Activated naive CD4-positive, alpha-beta T cell treated with anti-CD3 and anti-CD28 coated beads for 36 hours (primary cell): ENCODE measurements at regions of chr22 and their contacts with region 1.

Region 1: DNA sequence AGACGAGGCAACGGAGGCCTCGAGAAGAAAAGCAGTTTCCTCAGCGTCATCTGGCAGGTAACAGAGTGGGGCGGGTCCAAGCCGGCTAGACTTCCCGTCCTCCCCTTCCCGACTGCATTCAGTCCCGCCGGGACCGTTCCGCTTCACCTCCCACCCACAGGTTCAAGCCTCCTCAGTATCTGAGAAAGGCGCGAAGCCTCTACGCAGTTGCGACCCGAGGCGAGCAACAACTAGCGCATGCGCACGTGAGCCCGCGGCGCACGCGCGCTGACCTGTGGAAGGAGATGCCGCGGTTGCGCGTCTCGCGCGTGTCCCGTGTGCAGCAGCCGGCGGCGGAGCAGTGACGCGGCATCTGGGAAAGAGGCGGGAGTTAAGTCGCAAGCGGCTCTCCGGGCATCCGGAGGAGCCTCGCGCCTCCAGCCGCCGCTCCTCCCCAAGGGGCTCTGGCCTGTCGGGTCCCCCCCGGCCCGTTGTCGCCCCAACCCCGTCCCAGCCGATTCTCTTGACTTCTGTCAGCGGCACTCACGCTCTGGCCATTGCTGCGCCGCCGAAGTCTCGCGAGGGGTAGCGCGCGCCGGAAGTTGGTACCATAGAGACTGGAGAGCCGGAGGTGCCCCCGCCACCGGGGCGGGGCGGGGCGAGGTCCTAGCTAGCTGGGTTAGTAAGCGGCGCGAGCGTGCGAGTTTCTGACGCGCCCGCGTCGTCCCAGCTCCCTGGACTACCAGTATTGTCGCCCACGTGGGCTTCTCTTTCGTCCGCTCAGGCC is at the start of gene THAP7:
- DNase-seq: peak; percentile 97
- H3K4me3 Mint-ChIP-seq: peak within 1 kb of the TSS; percentile 89
- H3K27ac Mint-ChIP-seq: peak within 1 kb of the TSS; percentile 96
- H3K4me1 Mint-ChIP-seq: peaks cover 28% of the 10 kb centered on the region
- H3K27me3 Mint-ChIP-seq: no peaks in the 10 kb centered on the region
- total RNA-seq, gene THAP7: 20.4 to 21.2 TPM

Region 2: DNA sequence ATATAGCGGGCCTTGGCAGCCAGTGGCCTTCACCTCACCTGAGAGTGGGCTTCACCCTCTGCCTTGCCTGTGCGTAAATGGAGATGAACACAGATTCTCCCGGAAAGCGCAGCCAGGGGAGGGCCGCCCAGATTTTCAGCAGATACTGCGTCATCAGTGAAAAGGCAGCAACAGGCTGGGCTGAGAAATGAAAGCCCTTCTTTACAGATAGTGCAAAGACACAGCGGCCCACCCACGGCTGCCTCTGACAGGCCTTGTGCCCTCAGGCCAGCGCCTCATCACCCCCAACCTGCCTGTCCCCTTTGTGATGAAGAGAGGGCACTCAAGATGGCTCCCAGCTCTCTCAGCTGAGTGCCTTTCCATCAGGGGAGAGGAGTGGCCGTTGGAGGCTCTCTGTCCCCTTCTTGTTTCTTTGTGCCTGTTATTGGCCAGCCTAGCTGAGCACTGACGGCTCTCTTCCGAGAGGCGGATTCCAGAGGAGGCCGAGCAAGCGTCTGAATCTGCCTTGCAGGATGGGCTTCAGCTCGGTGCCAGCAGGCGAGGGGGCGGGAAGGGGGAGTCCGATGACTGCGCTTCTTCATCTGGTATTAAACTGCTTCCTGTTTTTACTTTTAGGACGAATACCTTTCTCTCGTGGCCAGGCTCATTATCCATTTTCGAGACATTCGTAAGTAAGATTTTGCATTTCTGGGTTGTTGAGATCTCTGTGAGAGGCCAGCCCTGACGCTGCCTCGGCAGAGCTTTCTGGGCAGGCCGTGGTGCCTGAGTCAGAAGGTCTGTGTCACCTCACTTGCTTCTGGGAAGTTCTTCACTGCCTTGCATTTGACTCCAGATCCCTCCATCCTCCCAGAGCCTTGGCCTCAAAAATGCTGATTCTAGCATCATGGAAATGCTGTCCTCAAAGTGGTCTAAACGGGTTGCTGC is 450.7 kb before region 1 on chr22:
- CTCF ChIA-PET with region 1: no interaction called
- intact Hi-C with region 1: loop called (anchors 5 kb)
- DNase-seq: peak; percentile 87
- H3K4me3 Mint-ChIP-seq: peak overlapping the region; percentile 70
- H3K27ac Mint-ChIP-seq: peak overlapping the region; percentile 100
- H3K4me1 Mint-ChIP-seq: peaks cover 93% of the 10 kb centered on the region
- H3K27me3 Mint-ChIP-seq: no peaks in the 10 kb centered on the region

Region 3: DNA sequence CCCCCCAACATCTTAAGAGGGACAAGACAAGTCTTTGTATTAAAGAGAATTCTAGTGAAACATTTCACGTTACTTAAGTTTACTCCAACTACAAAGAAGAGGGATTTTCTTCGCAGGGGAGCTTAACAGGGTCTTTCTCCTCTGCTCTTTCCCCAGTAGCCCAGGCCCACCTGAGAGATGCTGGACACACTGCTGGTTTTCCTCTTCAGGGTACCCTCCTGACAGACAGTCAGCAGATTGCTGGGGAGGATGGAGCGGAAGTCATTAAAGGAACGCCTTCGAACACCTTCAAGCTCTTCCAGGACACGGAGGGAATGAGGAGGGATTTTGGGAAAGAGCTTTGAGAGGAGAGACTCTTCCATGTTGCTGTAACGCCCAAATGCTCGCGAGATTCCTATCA is 182.3 kb before region 1 on chr22:
- CTCF ChIA-PET with region 1: no interaction called
- intact Hi-C with region 1: no loop called
- DNase-seq: no peak
- H3K4me3 Mint-ChIP-seq: no peak overlapping the region
- H3K27ac Mint-ChIP-seq: no peak overlapping the region
- H3K4me1 Mint-ChIP-seq: no peaks in the 10 kb centered on the region
- H3K27me3 Mint-ChIP-seq: no peaks in the 10 kb centered on the region

Region 4: GRCh38 chr22:20916983-20917810 is 84.5 kb before region 1 on chr22 and contains the start of gene CRKL:
- CTCF ChIA-PET with region 1: interaction called, 3 read pairs
- intact Hi-C with region 1: loop called (anchors 1 kb)
- DNase-seq: peak; percentile 97
- H3K4me3 Mint-ChIP-seq: peak within 1 kb of the TSS; percentile 98
- H3K27ac Mint-ChIP-seq: peak within 1 kb of the TSS; percentile 86
- H3K4me1 Mint-ChIP-seq: peaks cover 28% of the 10 kb centered on the region
- H3K27me3 Mint-ChIP-seq: no peaks in the 10 kb centered on the region
- total RNA-seq, gene CRKL: 60.5 to 62.2 TPM

Region 5: GRCh38 chr22:20981787-20982562 is 19.8 kb before region 1 on chr22 and contains the start of gene LZTR1:
- CTCF ChIA-PET with region 1: interaction called, 4 read pairs
- intact Hi-C with region 1: loop called (anchors 1 kb)
- DNase-seq: peak; percentile 80
- H3K4me3 Mint-ChIP-seq: peak within 1 kb of the TSS; percentile 97
- H3K27ac Mint-ChIP-seq: peak within 1 kb of the TSS; percentile 87
- H3K4me1 Mint-ChIP-seq: peaks cover 41% of the 10 kb centered on the region
- H3K27me3 Mint-ChIP-seq: no peaks in the 10 kb centered on the region
- total RNA-seq, gene LZTR1: 23.1 to 27.4 TPM

Region 6: GRCh38 chr22:21102659-21103267 is 101.0 kb after region 1 on chr22:
- CTCF ChIA-PET with region 1: interaction called, 3 read pairs
- intact Hi-C with region 1: loop called (anchors 10 kb)
- DNase-seq: peak; percentile 89
- H3K4me3 Mint-ChIP-seq: peak overlapping the region; percentile 44
- H3K27ac Mint-ChIP-seq: no peak overlapping the region
- H3K4me1 Mint-ChIP-seq: peaks cover 7% of the 10 kb centered on the region
- H3K27me3 Mint-ChIP-seq: peaks cover 5% of the 10 kb centered on the region